HEK293 (cell line): ENCODE measurements at regions of chr4 and their contacts with region 1.

Region 1: DNA sequence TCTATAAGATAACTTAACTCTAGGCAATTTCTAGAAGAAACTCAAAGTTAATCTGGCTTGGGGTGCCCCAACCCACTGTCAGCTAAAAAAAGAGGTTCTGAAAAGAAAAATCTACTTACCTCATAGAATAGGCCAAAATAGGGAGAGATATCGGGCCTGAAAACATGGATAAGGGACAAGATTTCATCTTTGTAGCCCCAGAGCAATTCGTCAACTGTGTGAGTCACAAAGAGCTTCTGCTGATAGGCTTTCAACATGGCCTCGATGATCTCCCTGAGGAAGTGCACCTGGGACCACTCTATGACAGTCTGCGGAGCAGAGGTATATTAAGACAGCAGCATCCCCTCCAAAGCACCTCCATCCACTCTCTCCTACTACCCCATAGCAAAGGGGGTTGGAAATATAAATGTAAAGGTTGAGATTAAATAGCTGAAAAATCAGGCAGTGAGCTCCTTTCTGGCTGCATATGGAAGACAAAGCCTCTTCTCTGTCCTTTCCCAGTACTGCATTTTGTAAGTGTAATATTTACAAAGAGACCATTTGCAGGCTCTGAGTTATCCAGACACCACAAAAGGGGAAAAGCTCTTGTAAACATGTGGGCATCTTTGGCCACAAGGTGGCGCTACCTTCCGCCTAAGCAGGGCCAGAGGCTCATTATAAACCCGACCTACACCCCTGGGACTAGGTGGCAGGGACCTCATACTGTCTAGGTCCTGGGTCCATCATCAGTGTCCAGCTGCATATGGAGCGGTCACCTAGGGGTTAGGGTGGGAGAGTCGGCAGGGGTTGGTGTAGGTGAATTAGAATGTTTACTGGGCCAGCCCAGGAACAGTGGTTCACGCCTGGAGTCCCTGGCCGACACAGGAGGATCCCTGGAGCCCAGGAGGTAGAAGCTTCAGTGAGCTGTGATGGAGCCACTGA is 31.5 kb upstream of the NUP54 start:
- H3K4me3 ChIP-seq: no peak overlapping the region
- H3K27ac ChIP-seq: no peak overlapping the region
- H3K4me1 ChIP-seq: no peaks in the 10 kb centered on the region
- CTCF ChIP-seq: peak; percentile 61; the same call in 1 of the 2 replicates

Region 2: DNA sequence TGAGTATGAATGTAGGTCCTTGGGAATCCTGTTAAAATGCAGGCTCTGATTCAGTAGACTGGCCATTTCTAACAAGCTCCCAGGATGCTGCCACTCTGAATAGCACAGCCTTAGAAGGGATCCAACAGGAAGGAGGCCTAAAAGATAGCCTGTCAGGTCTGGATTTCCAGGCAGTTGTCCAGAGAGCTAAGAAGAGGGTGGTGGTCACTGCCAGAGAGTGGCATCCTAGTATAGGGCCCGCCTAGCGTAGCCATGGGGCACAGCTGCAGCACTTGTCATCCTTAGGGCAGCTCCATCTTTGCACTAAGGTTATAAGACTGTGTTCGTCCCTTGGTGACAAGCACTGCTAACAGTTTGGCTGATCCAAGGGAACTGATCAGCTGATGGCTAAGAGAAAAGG is 11.0 kb before region 1 on chr4:
- CTCF ChIA-PET with region 1: interaction called, 21 read pairs
- POLR2A ChIA-PET with region 1: no interaction called
- H3K4me3 ChIP-seq: no peak overlapping the region
- H3K27ac ChIP-seq: no peak overlapping the region
- H3K4me1 ChIP-seq: no peaks in the 10 kb centered on the region
- CTCF ChIP-seq: no peak

Region 3: GRCh38 chr4:76205476-76205875 is 25.8 kb after region 1 on chr4:
- CTCF ChIA-PET with region 1: interaction called, 11 read pairs
- POLR2A ChIA-PET with region 1: no interaction called
- H3K4me3 ChIP-seq: no peak overlapping the region
- H3K27ac ChIP-seq: no peak overlapping the region
- H3K4me1 ChIP-seq: no peaks in the 10 kb centered on the region
- CTCF ChIP-seq: no peak

Region 4: DNA sequence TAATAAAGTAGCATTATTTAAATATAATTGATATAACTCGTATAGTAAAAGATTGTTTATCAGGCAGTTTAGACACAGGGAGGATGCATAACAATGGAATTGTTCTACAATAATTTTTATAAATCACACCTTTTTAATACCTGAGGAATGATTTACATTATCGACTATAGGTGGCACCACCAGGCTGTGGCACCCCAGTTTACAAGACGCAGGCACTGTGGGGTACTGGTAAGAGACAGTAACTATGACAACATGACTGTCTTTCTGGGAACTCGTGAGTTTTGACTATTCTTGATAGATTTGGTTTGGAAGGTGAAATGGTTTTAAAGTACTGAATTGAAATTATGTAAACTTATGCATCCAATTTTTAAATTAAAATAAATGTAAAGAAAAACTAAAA is 99.8 kb after region 1 on chr4:
- CTCF ChIA-PET with region 1: interaction called, 11 read pairs
- POLR2A ChIA-PET with region 1: no interaction called
- H3K4me3 ChIP-seq: no peak overlapping the region
- H3K27ac ChIP-seq: no peak overlapping the region
- H3K4me1 ChIP-seq: no peaks in the 10 kb centered on the region
- CTCF ChIP-seq: no peak

Region 5: DNA sequence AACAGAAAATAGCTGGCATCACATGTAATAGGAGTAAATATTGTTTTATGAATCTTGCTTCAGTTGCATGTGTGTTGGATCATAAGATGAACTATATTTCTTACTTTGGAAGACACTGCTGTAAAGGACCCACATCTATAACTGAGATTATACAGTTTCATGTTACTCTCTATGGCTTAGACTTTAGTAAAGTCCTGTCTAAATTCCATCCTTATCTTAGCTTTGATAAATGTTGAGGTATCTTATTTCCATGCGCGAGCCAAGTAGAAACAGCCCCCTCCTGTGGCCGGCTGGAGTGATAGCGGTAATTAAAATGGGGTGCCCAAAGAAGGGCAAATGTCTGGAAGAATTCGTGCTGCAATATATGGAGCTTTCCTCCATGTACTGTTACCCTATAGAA is 198.3 kb after region 1 on chr4:
- CTCF ChIA-PET with region 1: interaction called, 119 read pairs
- POLR2A ChIA-PET with region 1: no interaction called
- H3K4me3 ChIP-seq: no peak overlapping the region
- H3K27ac ChIP-seq: no peak overlapping the region
- H3K4me1 ChIP-seq: peaks cover 2% of the 10 kb centered on the region; the same call in 1 of the 2 replicates
- CTCF ChIP-seq: no peak